ENCODE measurements at regions of chr14 and their contacts with region 1.

Region 1: GRCh38 chr14:104130974-104131651 is 7.3 kb upstream of the KIF26A start:
- DNase-seq: no peak
- H3K4me3 ChIP-seq: no peak overlapping the region
- H3K27ac ChIP-seq: no peak overlapping the region
- H3K4me1 ChIP-seq: no peaks in the 10 kb centered on the region
- H3K27me3 ChIP-seq: peaks cover 18% of the 10 kb centered on the region
- CTCF ChIP-seq: peak; percentile 71 to 83

Region 2: GRCh38 chr14:104085030-104085888 is 45.9 kb before region 1 on chr14 and contains the start of gene ASPG:
- CTCF ChIA-PET with region 1: no interaction called
- dilution Hi-C with region 1: loop called (anchors 5 kb)
- in situ Hi-C with region 1: no loop called
- intact Hi-C with region 1: no loop called
- DNase-seq: no peak
- H3K4me3 ChIP-seq: no peak within 1 kb of the TSS
- H3K27ac ChIP-seq: no peak within 1 kb of the TSS
- H3K4me1 ChIP-seq: no peaks in the 10 kb centered on the region
- H3K27me3 ChIP-seq: peaks cover 11% of the 10 kb centered on the region
- CTCF ChIP-seq: no peak
- total RNA-seq, gene ASPG: 0.09 TPM in 1 of 2 donors, not detected in the other

Region 3: DNA sequence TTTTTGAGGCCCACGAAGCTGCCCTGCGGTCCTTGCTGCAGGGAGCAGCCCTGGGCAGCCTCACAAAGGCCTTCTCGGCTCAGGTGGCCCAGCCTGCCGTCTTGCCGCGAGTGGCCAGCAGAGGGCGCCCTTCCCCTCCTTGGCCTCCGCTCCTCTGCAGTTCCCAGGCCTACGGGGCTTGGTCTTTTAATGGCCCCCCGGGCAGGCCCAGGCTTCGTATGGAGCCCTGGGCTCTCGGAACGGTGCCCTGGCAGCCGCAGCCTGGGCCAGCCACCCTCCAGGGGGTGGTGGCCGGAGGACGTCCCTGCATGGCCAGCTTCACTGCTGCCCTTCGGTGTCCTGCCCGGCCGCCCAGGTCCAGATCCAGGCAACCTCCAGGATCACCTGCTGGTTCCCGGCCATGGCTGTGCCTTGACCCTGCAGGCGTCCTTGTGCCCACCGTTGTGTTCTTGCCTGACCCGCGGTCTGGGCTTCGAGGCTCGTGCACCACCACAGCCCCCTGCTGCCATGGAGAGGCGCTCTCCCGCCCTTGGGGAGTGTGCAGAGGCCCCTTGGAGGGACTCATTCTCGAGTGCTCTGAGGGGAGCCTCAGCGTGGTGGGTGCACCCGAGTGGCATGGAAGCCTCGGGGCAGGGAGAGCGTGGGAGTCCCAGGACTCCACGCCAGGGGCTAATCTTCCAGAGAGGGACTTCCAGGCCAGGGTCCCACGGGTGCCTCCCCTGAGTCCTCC is 36.2 kb before region 1 on chr14:
- CTCF ChIA-PET with region 1: no interaction called
- dilution Hi-C with region 1: no loop called
- in situ Hi-C with region 1: loop called in 1 of 2 experiments (anchors 5 kb)
- intact Hi-C with region 1: loop called (anchors 1 kb)
- DNase-seq: peak; percentile 26
- H3K4me3 ChIP-seq: no peak overlapping the region
- H3K27ac ChIP-seq: no peak overlapping the region
- H3K4me1 ChIP-seq: no peaks in the 10 kb centered on the region
- H3K27me3 ChIP-seq: peaks cover 3% of the 10 kb centered on the region
- CTCF ChIP-seq: peak; percentile 73 to 93